ENCODE measurements at regions of chr10 and their contacts with region 1.

Region 1: DNA sequence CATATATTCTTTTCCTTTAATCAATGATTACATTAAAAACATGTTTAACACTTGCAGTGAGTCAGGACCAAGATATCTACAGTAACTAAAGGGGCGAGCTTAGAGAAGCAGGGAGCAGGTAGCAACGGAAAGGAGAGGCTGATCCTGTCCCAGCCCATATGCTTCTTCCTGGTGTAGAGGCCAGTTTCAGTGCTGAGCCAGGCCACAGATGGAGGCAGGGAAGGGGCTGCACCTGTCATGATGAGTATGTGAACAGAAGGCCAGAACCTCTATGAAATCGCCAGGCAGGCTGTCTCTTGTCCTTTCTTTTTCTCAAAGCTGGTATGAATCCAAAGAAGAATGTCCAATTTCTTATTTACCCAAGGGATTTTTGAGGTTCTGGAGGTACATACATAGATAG is 16.3 kb downstream of the REEP3 start:
- DNase-seq: no peak
- ATAC-seq: peak; percentile 19; the same call in 1 of the 2 replicates
- H3K4me3 ChIP-seq: no peak overlapping the region
- H3K27ac ChIP-seq: no peak overlapping the region
- H3K4me1 ChIP-seq: no peaks in the 10 kb centered on the region
- H3K27me3 ChIP-seq: no peaks in the 10 kb centered on the region
- CTCF ChIP-seq: no peak

Region 2: DNA sequence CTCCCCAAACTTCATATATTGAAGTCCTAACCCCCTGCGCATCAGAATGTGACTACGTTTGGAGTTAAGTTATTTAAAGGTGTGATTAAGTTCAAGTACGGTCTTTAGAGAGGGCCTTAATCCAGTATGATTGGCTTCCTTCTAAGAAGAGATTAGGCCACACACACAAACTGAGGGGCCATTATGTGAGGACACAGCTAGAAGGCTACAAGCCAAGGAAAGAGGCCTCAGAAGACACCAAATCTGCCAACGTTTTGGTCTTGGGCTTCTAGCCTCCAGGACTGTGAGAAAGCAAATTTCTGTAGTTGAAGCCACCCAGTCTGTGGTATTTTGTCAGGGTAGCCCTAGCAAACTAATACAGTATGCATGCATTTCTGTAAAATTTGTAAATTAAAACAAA is 25.3 kb after region 1 on chr10:
- CTCF ChIA-PET with region 1: no interaction called
- POLR2A ChIA-PET with region 1: no interaction called
- intact Hi-C with region 1: loop called (anchors 2 kb)
- DNase-seq: no peak
- ATAC-seq: peak; percentile 25
- H3K4me3 ChIP-seq: no peak overlapping the region
- H3K27ac ChIP-seq: no peak overlapping the region
- H3K4me1 ChIP-seq: no peaks in the 10 kb centered on the region
- H3K27me3 ChIP-seq: no peaks in the 10 kb centered on the region
- CTCF ChIP-seq: no peak

Region 3: GRCh38 chr10:63588436-63589167 is 51.1 kb after region 1 on chr10:
- CTCF ChIA-PET with region 1: no interaction called
- POLR2A ChIA-PET with region 1: no interaction called
- intact Hi-C with region 1: loop called (anchors 5 kb)
- DNase-seq: peak; percentile 93
- ATAC-seq: peak; percentile 79
- H3K4me3 ChIP-seq: peak overlapping the region; percentile 2; the same call in 1 of the 2 replicates
- H3K27ac ChIP-seq: peak overlapping the region; percentile 44
- H3K4me1 ChIP-seq: peaks cover 31% of the 10 kb centered on the region
- H3K27me3 ChIP-seq: no peaks in the 10 kb centered on the region
- CTCF ChIP-seq: no peak